ENCODE measurements at regions of chr6 and their contacts with region 1.

Region 1: DNA sequence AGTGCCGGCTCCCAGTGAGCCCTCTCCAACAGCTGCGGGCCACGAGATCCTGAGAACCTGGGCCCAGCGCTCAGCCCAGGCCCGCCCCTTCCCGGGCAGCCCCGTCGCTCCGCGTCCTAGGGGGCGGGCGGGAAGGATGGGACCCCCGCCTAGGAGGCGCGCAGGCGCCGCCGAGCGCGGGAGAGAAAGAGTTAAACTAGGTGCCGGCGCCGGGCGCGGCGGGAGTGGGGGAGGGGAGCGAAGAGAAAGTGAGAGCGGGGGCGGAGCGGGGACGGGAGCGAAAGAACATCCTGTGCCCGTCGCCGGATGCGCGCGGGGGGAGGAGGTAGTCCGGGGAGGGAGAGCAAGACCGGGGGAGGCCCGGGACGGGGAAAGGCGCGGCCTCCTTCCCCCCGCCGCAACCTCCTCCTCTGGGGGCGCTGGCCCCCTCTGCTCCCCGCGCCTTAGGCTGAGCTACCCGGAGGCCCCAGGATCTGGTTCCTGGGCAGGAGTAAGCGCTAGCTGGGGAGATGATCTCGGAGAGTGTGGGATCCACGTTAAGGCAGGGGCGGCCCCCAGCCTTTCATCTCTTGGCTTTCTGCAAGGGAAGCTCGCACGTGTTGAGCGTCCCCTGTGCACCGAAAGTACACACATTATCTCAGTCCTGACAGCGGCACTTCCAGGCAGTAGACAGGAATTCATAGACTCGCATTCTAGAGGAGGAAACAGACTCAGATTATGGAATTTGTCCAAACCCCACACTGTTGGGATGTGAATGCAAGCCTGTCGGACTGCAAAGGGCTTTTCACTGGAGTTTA is 4.9 kb upstream of the ARMC12 start:
- H3K4me3 ChIP-seq: peak overlapping the region; percentile 68
- H3K27ac ChIP-seq: peak overlapping the region; percentile 79
- H3K4me1 ChIP-seq: peaks cover 13% of the 10 kb centered on the region
- CTCF ChIP-seq: peak; percentile 88

Region 2: DNA sequence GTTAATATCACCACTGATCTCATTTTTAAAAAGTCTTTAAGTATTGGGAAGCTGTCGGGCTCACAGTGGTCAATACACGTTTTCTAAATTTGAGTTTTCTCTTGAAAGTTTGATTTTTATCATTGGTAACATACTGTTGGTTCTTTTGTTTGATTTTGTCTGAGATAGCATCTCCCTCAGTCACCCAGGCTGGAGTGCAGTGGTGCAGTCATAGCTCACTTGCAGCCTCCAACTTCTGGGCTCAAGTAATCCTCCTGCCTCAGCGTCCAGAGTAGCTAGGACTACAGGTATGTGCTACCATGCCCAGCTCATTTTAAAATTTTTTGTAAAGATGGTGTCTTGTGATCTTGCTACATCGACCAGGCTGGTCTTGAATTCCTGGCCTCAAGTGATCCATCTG is 380.5 kb before region 1 on chr6:
- CTCF ChIA-PET with region 1: no interaction called
- POLR2A ChIA-PET with region 1: no interaction called
- H3K4me3 ChIP-seq: no peak overlapping the region
- H3K27ac ChIP-seq: no peak overlapping the region
- H3K4me1 ChIP-seq: no peaks in the 10 kb centered on the region
- CTCF ChIP-seq: no peak

Region 3: GRCh38 chr6:35534407-35535170 is 197.3 kb before region 1 on chr6:
- CTCF ChIA-PET with region 1: interaction called, 12 read pairs
- POLR2A ChIA-PET with region 1: no interaction called
- H3K4me3 ChIP-seq: no peak overlapping the region
- H3K27ac ChIP-seq: no peak overlapping the region
- H3K4me1 ChIP-seq: no peaks in the 10 kb centered on the region
- CTCF ChIP-seq: no peak

Region 4: DNA sequence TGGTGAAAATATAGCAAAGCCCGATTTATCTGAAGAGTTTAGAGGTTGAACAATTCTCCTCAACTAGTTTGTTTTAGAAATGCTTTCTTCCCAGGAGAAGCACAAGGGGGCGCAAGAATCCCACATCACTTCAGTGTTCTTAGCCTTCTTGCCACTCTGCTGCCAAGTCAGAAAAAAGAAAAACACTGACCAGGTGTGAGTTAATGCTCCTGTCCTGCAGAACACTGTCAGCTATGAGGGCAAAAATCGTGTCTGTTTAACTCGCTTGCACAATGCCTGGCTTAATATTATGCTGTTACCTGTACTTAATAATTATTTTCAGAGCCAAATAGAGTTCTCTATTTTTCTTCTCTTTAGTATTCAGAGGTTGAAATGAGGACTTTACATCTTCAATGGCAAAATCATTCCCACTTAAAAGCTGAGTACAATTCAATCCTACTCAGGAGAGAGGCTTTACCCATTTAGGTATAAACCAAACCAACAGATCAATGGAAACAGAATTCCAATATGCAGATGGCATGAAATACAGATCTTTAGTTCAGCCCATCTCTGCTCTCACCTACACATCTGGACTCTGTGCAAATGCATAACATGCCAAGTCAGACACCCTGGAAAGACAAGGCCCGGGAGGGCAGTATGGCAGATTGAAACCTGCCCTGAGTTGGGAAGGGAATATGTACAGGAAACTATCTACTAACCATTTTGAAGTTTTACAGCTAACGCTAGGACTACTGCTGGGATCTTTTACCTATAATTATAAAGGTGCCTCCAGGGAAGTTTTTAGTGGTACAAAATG is 147.8 kb before region 1 on chr6:
- CTCF ChIA-PET with region 1: interaction called, 258 read pairs
- POLR2A ChIA-PET with region 1: interaction called, 3 read pairs
- H3K4me3 ChIP-seq: no peak overlapping the region
- H3K27ac ChIP-seq: no peak overlapping the region
- H3K4me1 ChIP-seq: no peaks in the 10 kb centered on the region
- CTCF ChIP-seq: peak; percentile 69; the same call in 1 of the 2 replicates

Region 5: GRCh38 chr6:35624341-35625070 is 107.4 kb before region 1 on chr6:
- CTCF ChIA-PET with region 1: interaction called, 21 read pairs
- POLR2A ChIA-PET with region 1: interaction called, 3 read pairs
- H3K4me3 ChIP-seq: no peak overlapping the region
- H3K27ac ChIP-seq: no peak overlapping the region
- H3K4me1 ChIP-seq: no peaks in the 10 kb centered on the region; the same call in 1 of the 2 replicates
- CTCF ChIP-seq: no peak

Region 6: DNA sequence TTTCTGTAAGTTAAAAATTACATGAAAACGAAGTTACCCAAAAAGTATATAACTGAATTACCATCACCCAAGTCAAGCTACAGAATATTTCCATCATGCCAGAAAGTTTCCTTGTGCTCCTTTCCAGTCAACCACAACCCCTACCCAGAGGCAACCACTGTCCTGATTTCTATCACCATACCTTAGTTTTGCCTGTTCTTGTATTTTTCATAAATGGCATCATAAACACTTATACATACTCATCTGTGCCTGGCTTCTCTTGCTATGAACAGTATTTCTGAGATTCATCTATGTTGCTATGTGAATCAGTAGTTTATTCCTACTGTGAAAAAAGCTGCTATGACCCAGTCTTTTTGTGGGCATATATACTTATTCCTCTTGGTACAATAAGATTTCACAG is 50.6 kb before region 1 on chr6:
- CTCF ChIA-PET with region 1: interaction called, 18 read pairs
- POLR2A ChIA-PET with region 1: interaction called, 4 read pairs
- H3K4me3 ChIP-seq: no peak overlapping the region
- H3K27ac ChIP-seq: no peak overlapping the region
- H3K4me1 ChIP-seq: peaks cover 12% of the 10 kb centered on the region; the same call in 1 of the 2 replicates
- CTCF ChIP-seq: no peak

Region 7: GRCh38 chr6:35955976-35956375 is 224.0 kb after region 1 on chr6:
- CTCF ChIA-PET with region 1: interaction called, 14 read pairs
- POLR2A ChIA-PET with region 1: no interaction called
- H3K4me3 ChIP-seq: no peak overlapping the region
- H3K27ac ChIP-seq: no peak overlapping the region
- H3K4me1 ChIP-seq: no peaks in the 10 kb centered on the region
- CTCF ChIP-seq: peak; percentile 54; the same call in 1 of the 2 replicates